ENCODE measurements at regions of chr10 and their contacts with region 1.

Region 1: DNA sequence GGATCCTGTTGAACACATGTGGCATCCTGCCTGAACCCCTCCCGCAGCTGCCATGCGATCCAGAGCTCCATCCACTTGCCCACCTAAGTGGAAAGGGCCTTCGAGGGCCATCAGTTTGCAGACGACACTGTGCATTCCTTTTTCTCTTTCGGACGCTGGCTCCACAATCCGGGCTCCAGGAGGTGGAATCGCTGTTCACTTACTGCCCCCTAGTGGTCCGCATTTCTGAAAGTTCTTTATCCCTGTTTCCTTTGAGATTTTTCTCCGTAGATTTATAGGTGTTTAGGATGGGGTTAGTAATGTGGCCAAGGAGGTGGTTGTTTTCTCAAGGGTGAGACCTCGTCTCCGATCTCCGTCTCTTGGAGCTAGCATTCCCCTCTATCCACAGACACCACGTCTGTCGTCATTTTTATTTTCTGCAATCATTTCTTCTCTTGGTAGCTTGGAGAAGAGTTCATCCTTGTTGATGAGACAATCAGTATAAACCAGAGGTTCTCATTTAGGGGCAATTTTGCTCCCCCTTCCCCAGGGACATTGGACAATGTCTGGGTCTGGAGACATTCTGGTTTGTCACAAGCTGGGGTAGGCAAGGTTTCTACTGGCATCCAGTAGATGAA is 204.6 kb downstream of the ARHGAP21 start:
- DNase-seq: peak in 4 of 9 experiments; percentile 19 to 48 (median 28)
- ATAC-seq: no peak
- H3K4me3 ChIP-seq: no peak overlapping the region
- H3K4me3 Mint-ChIP-seq: peak overlapping the region; percentile 70
- H3K27ac ChIP-seq: no peak overlapping the region
- H3K27ac Mint-ChIP-seq: no peak overlapping the region
- H3K4me1 ChIP-seq: peaks cover 9% of the 10 kb centered on the region
- H3K4me1 Mint-ChIP-seq: peaks cover 13% of the 10 kb centered on the region
- H3K27me3 ChIP-seq: no peaks in the 10 kb centered on the region
- H3K27me3 Mint-ChIP-seq: no peaks in the 10 kb centered on the region
- CTCF ChIP-seq: peak; percentile 52

Region 2: GRCh38 chr10:24406809-24407483 is 112.1 kb before region 1 on chr10:
- CTCF ChIA-PET with region 1: no interaction called
- POLR2A ChIA-PET with region 1: no interaction called
- intact Hi-C with region 1: no loop called
- DNase-seq: no peak
- ATAC-seq: no peak
- H3K4me3 ChIP-seq: no peak overlapping the region
- H3K4me3 Mint-ChIP-seq: no peak overlapping the region
- H3K27ac ChIP-seq: no peak overlapping the region
- H3K27ac Mint-ChIP-seq: no peak overlapping the region
- H3K4me1 ChIP-seq: no peaks in the 10 kb centered on the region
- H3K4me1 Mint-ChIP-seq: no peaks in the 10 kb centered on the region
- H3K27me3 ChIP-seq: no peaks in the 10 kb centered on the region
- H3K27me3 Mint-ChIP-seq: no peaks in the 10 kb centered on the region
- CTCF ChIP-seq: no peak

Region 3: GRCh38 chr10:24503461-24504320 is 15.4 kb before region 1 on chr10:
- CTCF ChIA-PET with region 1: interaction called, 15 read pairs
- POLR2A ChIA-PET with region 1: interaction called, 3 read pairs
- intact Hi-C with region 1: no loop called
- DNase-seq: peak in 2 of 9 experiments; percentile 21 to 32
- ATAC-seq: no peak
- H3K4me3 ChIP-seq: no peak overlapping the region
- H3K4me3 Mint-ChIP-seq: no peak overlapping the region
- H3K27ac ChIP-seq: no peak overlapping the region
- H3K27ac Mint-ChIP-seq: no peak overlapping the region
- H3K4me1 ChIP-seq: no peaks in the 10 kb centered on the region
- H3K4me1 Mint-ChIP-seq: no peaks in the 10 kb centered on the region
- H3K27me3 ChIP-seq: peaks cover 0 to 4% of the 10 kb centered on the region in 2 experiments
- H3K27me3 Mint-ChIP-seq: peaks cover 15% of the 10 kb centered on the region
- CTCF ChIP-seq: no peak